ENCODE measurements at regions of chr3 and their contacts with region 1.

Region 1: GRCh38 chr3:50292159-50293078 is at the start of gene IFRD2:
- DNase-seq: peak; percentile 98
- H3K4me3 ChIP-seq: peak within 1 kb of the TSS; percentile 89
- H3K27ac ChIP-seq: peak within 1 kb of the TSS; percentile 32
- H3K4me1 ChIP-seq: peaks cover 6% of the 10 kb centered on the region
- CTCF ChIP-seq: no peak
- total RNA-seq, gene IFRD2: 73.1 and 95.5 TPM in 2 replicates

Region 2: GRCh38 chr3:50337191-50337841 is 44.9 kb after region 1 on chr3:
- CTCF ChIA-PET with region 1: no interaction called
- POLR2A ChIA-PET with region 1: interaction called, 10 read pairs
- intact Hi-C with region 1: loop called (anchors 5 kb)
- DNase-seq: peak; percentile 98
- H3K4me3 ChIP-seq: peak overlapping the region; percentile 90
- H3K27ac ChIP-seq: peak overlapping the region; percentile 86
- H3K4me1 ChIP-seq: peaks cover 63% of the 10 kb centered on the region
- CTCF ChIP-seq: no peak